Common myeloid progenitor, CD34-positive (primary cell): ENCODE measurements at regions of chr4 and their contacts with region 1.

Region 1: GRCh38 chr4:110344162-110344561 is 131.8 kb upstream of the ENPEP start:
- DNase-seq: peak; percentile 11 to 33 (median 28)
- H3K4me3 ChIP-seq: no peak overlapping the region
- H3K27ac ChIP-seq: no peak overlapping the region
- H3K4me1 ChIP-seq: no peaks in the 10 kb centered on the region
- H3K27me3 ChIP-seq: peaks cover 0 to 1% (median 0%) of the 10 kb centered on the region in 5 experiments

Region 2: GRCh38 chr4:110510955-110511544 is 166.9 kb after region 1 on chr4:
- CTCF ChIA-PET with region 1: interaction called, 35 read pairs
- POLR2A ChIA-PET with region 1: no interaction called
- DNase-seq: peak; percentile 62 to 83 (median 78)
- H3K4me3 ChIP-seq: no peak overlapping the region
- H3K27ac ChIP-seq: no peak overlapping the region
- H3K4me1 ChIP-seq: peaks cover 0 to 10% (median 2%) of the 10 kb centered on the region in 4 experiments
- H3K27me3 ChIP-seq: no peaks in the 10 kb centered on the region

Region 3: DNA sequence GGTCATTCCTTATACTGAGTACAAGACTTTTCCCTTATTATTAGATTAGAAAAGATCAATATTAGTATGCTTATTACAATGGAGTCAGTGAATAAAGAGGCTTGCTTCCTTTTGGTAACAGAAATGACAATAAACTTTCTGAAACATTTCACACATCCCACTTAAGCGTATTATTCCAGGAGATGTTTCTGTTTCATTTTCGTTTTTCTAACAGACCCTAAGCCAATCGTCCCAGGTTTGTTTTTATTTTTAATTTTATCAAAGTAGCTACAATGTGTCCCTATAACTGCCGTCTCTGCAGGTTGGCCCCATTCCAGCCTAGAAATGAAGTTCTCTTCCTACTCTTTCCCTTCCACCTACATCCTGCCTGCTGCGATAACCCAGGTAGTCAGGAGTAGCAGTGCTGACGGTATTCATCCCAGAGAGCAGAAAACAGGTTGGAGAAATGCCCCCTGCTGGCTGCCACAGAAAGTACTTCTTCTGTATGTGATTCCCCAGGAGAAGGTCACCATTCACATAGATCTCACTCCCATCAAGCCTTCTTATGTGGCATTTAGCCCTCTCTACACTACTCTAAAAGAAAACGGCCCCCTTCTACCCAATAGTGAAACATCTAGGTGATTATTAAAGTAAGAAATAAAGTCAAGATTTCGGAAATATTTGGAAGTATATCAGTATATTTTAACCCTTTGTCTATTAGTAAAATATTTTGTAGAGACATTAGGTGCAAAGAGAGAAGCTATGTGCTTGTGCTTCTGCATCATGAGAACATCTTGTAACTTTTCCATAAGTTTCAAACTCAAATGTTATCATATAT is 172.2 kb after region 1 on chr4:
- CTCF ChIA-PET with region 1: interaction called, 35 read pairs
- POLR2A ChIA-PET with region 1: no interaction called
- DNase-seq: peak; percentile 82 to 86 (median 85)
- H3K4me3 ChIP-seq: peak overlapping the region; percentile 57 to 100 (median 88)
- H3K27ac ChIP-seq: peak overlapping the region; percentile 30 to 83
- H3K4me1 ChIP-seq: peaks cover 0 to 10% (median 4%) of the 10 kb centered on the region in 4 experiments
- H3K27me3 ChIP-seq: no peaks in the 10 kb centered on the region